PC-9 (cell line): ENCODE measurements at regions of chr9 and their contacts with region 1.

Region 1: DNA sequence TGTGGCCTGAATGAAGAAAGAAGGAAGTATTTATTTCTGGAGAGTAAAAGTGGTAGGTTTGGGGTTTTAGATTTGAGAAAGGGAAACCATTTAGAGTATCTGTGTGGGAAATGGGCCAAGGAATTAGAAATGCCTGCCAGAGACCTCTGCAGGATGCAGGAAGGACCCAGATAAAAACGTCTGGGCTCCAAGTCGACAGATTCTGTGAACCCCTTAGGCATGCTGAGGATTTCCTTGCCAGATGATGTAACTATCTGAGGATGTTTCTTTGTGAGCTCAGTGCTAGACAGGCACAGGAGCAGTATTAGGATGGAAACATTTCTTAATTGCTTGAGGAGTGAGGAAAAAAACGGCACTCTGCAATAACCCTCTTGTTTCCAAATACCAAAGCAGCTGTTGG is 251.8 kb upstream of the DMRT1 start:
- DNase-seq: no peak
- H3K4me3 ChIP-seq: no peak overlapping the region
- H3K27ac ChIP-seq: peak overlapping the region; percentile 47
- H3K4me1 ChIP-seq: peaks cover 14% of the 10 kb centered on the region; the same call in 1 of the 2 replicates
- H3K27me3 ChIP-seq: no peaks in the 10 kb centered on the region
- CTCF ChIP-seq: no peak

Region 2: DNA sequence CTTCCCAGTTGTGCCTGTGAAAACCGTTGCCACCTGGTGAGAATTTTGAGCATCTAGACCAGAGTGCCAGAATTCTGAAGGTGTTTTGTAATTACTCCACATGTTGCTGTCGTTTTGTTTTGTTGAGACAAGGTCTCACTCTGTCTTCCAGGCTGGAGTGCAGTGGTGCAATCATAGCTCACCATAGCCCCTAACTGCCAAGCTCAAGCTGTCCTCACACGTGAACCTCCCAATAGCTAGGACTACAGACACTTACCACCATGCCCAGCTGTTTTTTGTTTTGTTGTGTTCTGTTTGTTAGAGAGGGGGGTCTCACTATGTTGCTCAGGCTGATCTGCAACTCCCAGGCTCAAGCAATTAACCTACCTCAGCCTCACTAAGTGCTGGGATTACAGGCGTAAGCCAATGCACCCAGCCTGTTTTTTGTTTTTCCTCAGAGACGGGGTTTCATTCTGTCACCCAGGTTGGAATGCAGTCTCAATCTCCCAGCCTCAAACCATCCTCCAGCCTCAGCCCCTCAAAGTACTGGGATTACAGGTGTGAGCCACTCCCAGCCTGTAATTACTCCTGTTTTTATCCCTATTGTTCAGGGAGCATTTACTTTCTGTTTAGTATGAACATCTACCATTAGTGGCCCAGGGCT is 130.6 kb after region 1 on chr9:
- CTCF ChIA-PET with region 1: no interaction called
- POLR2A ChIA-PET with region 1: interaction called, 15 read pairs
- intact Hi-C with region 1: no loop called
- DNase-seq: no peak
- H3K4me3 ChIP-seq: no peak overlapping the region
- H3K27ac ChIP-seq: no peak overlapping the region
- H3K4me1 ChIP-seq: no peaks in the 10 kb centered on the region
- H3K27me3 ChIP-seq: no peaks in the 10 kb centered on the region
- CTCF ChIP-seq: no peak